ENCODE measurements at regions of chr12 and their contacts with region 1.

Region 1: DNA sequence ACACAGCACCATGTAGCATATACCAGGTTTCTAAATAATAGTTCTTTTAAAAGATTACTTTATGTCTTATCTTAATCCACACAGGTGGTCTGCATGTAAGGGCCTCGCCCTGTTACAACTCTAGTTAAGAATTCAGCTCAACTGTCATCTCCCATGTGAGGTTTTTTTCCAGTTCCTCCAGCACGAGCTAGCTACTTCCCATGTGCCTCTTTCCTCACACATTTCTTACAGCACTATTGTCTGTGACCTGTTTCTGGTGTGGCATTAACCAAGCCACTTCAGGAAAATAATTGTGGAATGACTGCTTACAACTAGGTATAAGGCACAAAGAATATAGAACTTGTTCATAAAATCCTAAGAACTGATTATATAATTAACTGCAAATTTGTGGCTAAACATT is 65.5 kb downstream of the SH2B3 start:
- DNase-seq: no peak
- ATAC-seq: no peak
- H3K4me3 ChIP-seq: no peak overlapping the region
- H3K27ac ChIP-seq: no peak overlapping the region
- H3K4me1 ChIP-seq: no peaks in the 10 kb centered on the region
- H3K27me3 ChIP-seq: no peaks in the 10 kb centered on the region
- CTCF ChIP-seq: no peak
- POLR2A ChIP-seq: no peak

Region 2: DNA sequence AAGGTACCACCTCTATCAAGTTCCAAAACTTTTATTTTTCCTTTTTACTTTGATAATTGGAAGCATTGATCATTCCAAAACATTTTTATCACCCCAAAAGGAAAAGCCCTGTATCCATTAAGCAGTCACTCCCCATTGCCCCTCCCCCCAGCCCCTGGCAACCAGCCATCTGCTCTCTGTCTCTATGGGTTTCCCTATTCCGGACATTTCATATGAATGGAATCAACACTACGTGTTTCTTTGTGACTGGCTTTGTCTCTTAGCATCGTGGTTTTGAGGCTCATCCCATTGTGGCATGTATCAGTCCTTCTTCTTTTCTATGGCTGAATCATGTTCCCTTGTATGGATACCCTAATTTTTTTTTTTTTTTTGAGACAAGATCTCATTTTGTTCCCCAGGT is 84.4 kb before region 1 on chr12:
- in situ Hi-C with region 1: no loop called
- intact Hi-C with region 1: no loop called
- DNase-seq: no peak
- ATAC-seq: no peak
- H3K4me3 ChIP-seq: no peak overlapping the region
- H3K27ac ChIP-seq: no peak overlapping the region
- H3K4me1 ChIP-seq: no peaks in the 10 kb centered on the region
- H3K27me3 ChIP-seq: no peaks in the 10 kb centered on the region
- CTCF ChIP-seq: no peak
- POLR2A ChIP-seq: no peak

Region 3: DNA sequence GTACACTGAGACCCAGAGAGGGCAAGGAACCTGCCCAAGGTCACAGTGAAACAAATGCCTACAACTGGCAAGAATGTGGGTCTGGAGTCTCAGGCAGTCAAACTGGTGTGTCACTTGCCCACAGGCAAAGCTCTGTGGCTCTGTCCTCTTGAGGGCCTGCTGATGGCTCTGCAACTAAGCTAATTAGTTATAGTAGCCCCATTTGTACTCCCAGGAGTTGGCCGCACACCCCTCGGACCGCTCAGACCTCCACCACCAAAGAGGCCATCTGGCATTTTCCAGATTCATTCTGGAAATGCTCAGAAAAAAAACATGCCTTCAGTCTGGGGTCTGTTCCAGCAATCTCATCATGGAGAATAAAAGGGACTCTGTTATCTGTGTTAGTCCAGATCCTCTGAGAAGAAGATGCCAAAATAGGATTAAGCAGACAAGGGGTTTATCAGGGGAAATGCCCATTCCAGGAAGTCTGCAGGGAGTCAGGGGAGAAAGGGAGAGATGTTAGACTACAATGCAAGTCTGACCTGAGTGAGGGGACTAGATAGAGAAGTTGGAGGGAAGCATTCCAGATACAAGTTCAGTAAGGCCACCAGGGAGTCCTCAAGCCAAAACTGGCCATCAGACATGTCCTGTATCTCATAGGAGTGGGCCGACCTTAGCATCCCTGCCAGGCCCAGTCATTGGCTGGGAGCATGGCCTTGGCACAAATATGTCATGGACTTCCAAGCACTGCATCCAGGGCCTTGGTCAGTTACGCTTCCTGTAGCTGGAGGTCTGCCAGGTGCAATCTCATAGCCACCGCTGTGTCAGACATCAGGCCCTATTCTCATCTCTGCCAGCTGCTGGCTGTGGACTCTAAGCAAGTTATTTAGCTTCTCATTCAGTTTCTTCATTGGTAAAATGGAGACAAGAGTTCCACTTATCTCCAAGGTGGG is 1420.1 kb after region 1 on chr12:
- in situ Hi-C with region 1: no loop called
- intact Hi-C with region 1: loop called (anchors 10 kb)
- DNase-seq: no peak
- ATAC-seq: no peak
- H3K4me3 ChIP-seq: no peak overlapping the region
- H3K27ac ChIP-seq: no peak overlapping the region
- H3K4me1 ChIP-seq: no peaks in the 10 kb centered on the region
- H3K27me3 ChIP-seq: no peaks in the 10 kb centered on the region
- CTCF ChIP-seq: no peak
- POLR2A ChIP-seq: no peak